Activated naive CD8-positive, alpha-beta T cell treated with anti-CD3 and anti-CD28 coated beads, Interleukin-2, amount 10 ng/mL, durations not matched to agents 7 days and 5 days (primary cell): ENCODE measurements at regions of chr2 and their contacts with region 1.

Region 1: GRCh38 chr2:69914170-69914960 is 544 bp upstream of the MXD1 start:
- DNase-seq: no peak
- ATAC-seq: peak; percentile 92
- H3K4me3 Mint-ChIP-seq: peak overlapping the region; percentile 84
- H3K27ac Mint-ChIP-seq: peak overlapping the region; percentile 71
- H3K4me1 Mint-ChIP-seq: peaks cover 27% of the 10 kb centered on the region
- H3K27me3 Mint-ChIP-seq: no peaks in the 10 kb centered on the region

Region 2: GRCh38 chr2:69837533-69837932 is 76.8 kb before region 1 on chr2:
- POLR2A ChIA-PET with region 1: no interaction called
- DNase-seq: no peak
- ATAC-seq: no peak
- H3K4me3 Mint-ChIP-seq: no peak overlapping the region
- H3K27ac Mint-ChIP-seq: no peak overlapping the region
- H3K4me1 Mint-ChIP-seq: peaks cover 35% of the 10 kb centered on the region
- H3K27me3 Mint-ChIP-seq: no peaks in the 10 kb centered on the region

Region 3: DNA sequence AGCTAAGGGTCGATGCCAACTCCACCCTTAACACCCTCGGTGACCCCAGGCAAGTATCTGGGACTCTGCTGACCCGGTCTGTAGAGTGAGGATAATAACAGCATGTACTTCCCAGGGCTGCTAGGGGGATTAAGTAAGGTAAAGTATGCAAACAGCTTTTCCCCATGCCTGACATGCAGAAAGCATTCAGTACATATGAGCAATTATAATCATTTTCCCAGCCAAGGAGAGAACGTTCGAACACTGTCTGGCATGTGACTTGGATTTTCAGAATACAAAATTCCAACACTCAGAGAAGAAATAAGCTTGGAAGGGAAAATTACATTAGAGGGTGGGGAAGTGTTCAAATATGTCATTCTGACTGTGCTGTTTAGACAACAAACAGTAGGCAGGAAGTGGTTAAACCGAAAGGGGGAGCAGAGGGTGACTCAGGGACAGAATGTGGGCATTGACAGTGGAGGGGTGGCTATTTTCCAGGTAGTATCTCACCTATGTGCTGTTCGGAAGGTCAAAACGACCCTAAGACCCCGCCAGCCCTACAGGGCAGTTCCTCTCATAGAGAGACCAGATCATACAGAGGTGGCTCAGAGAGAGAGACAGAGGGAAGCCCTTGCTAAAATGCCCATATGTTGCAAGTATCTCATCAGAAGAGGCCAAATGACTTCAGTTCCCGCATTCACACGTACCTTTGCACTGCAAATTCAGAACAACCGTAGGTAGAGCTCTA is 32.1 kb after region 1 on chr2:
- POLR2A ChIA-PET with region 1: interaction called, 10 read pairs
- DNase-seq: peak; percentile 52
- ATAC-seq: peak; percentile 95
- H3K4me3 Mint-ChIP-seq: peak overlapping the region; percentile 68
- H3K27ac Mint-ChIP-seq: peak overlapping the region; percentile 83
- H3K4me1 Mint-ChIP-seq: peaks cover 25% of the 10 kb centered on the region
- H3K27me3 Mint-ChIP-seq: peaks cover 3% of the 10 kb centered on the region

Region 4: DNA sequence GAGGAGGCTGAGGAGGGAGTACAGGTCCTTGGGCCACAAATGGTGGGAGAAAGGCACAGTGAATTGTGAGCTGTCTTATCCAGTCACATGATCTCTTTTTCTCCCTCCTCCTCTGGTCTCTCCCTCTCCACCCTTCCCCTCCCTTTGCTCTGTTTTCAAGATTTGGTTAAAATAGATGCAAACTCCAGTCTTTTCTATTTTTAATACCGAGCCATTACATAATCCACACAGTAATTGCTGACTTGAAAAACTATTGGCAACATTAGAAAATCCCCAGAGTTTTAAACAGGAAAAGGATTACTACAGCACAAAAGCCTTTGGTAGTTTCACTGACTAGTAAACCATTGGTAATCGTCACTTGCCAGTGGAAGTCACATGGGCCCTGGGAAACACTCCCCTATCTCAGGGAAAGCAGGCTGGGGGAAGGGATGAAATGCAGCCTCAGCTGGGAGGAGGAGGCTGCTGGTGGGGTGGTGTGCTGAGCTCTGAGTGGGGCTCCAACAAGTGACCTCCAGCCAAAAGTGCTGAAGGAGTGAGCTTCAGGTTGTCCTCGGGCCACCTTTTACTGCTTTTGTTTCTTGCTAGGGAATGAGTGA is 115.5 kb after region 1 on chr2:
- POLR2A ChIA-PET with region 1: no interaction called
- DNase-seq: no peak
- ATAC-seq: no peak
- H3K4me3 Mint-ChIP-seq: no peak overlapping the region
- H3K27ac Mint-ChIP-seq: no peak overlapping the region
- H3K4me1 Mint-ChIP-seq: peaks cover 13% of the 10 kb centered on the region
- H3K27me3 Mint-ChIP-seq: no peaks in the 10 kb centered on the region

Region 5: DNA sequence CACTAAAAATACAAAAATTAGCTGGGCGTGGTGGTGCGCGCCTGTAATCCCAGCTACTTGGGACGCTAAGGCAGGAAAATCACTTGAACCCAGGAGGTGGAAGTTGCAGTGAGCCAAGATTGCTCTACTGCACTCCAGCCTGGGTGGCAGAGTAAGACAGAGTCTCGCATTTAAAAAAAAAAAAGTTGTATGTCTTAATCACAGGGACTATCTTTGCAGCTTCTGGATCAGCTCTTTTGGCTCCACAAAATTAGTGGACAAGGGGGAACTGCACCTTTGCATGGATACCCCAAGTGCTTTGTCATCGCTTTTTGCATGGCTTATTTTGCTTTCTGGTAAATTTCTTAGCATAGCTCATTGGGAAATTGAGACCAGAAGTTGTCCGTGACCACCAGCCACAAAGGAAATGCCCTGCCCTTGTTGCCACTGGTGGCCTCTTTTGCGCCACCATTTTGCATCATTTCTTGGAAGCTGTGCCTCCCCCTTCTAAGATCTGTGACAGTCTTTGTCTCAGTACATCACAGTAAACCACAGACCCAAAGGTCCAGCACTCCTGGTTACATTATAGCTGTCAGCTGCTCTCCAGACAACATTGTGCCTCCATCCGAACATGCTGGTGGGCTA is 129.0 kb after region 1 on chr2:
- POLR2A ChIA-PET with region 1: interaction called, 11 read pairs
- DNase-seq: peak; percentile 61
- ATAC-seq: peak; percentile 86
- H3K4me3 Mint-ChIP-seq: peak overlapping the region; percentile 75
- H3K27ac Mint-ChIP-seq: peak overlapping the region; percentile 94
- H3K4me1 Mint-ChIP-seq: peaks cover 56% of the 10 kb centered on the region
- H3K27me3 Mint-ChIP-seq: no peaks in the 10 kb centered on the region

Region 6: DNA sequence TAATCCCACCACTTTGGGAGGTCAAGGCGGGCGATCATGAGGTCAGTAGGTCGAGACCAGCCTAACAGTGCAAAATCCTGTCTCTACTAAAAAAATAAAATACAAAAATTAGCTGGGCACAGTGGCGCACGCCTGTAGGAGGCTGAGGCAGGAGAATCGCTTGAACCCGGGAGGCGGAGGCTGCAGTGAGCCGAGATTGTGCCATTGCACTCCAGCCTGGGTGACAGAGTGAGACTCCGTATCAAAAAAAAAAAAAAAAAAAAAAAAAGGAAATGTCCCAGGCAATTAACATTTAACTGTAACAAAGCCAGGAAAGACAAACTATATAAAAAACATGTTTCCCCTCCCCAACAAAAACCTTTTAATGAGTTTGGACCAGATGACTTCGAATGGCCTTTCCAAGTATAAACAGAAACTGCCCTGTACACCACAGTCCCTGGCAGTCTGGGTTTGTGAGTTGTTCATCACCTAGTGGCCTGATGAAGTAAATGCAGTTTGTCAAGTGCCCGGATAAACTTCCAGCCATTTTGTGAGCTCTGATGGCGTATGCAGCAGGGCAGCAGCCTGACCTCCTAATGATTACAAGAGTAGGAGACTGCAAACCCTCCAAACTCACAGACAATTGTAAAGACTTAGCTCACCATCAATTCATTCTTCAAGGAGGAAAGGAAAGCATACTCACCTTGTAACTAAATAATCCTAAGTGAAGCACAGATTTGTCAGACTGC is 156.3 kb after region 1 on chr2:
- POLR2A ChIA-PET with region 1: interaction called, 84 read pairs
- DNase-seq: no peak
- ATAC-seq: peak; percentile 76
- H3K4me3 Mint-ChIP-seq: peak overlapping the region; percentile 77
- H3K27ac Mint-ChIP-seq: peak overlapping the region; percentile 96
- H3K4me1 Mint-ChIP-seq: peaks cover 40% of the 10 kb centered on the region
- H3K27me3 Mint-ChIP-seq: no peaks in the 10 kb centered on the region

Region 7: GRCh38 chr2:70086838-70087701 is 172.7 kb after region 1 on chr2 and contains the start of gene PCBP1:
- POLR2A ChIA-PET with region 1: interaction called, 70 read pairs
- DNase-seq: peak; percentile 99
- ATAC-seq: peak; percentile 34
- H3K4me3 Mint-ChIP-seq: peak within 1 kb of the TSS; percentile 96
- H3K27ac Mint-ChIP-seq: peak within 1 kb of the TSS; percentile 98
- H3K4me1 Mint-ChIP-seq: peaks cover 47% of the 10 kb centered on the region
- H3K27me3 Mint-ChIP-seq: no peaks in the 10 kb centered on the region
- total RNA-seq, gene PCBP1: 459 to 467 TPM

Region 8: GRCh38 chr2:70132244-70133126 is 218.1 kb after region 1 on chr2:
- POLR2A ChIA-PET with region 1: interaction called, 16 read pairs
- DNase-seq: no peak
- ATAC-seq: peak; percentile 51
- H3K4me3 Mint-ChIP-seq: peak overlapping the region; percentile 84
- H3K27ac Mint-ChIP-seq: peak overlapping the region; percentile 96
- H3K4me1 Mint-ChIP-seq: peaks cover 60% of the 10 kb centered on the region
- H3K27me3 Mint-ChIP-seq: no peaks in the 10 kb centered on the region

Region 9: DNA sequence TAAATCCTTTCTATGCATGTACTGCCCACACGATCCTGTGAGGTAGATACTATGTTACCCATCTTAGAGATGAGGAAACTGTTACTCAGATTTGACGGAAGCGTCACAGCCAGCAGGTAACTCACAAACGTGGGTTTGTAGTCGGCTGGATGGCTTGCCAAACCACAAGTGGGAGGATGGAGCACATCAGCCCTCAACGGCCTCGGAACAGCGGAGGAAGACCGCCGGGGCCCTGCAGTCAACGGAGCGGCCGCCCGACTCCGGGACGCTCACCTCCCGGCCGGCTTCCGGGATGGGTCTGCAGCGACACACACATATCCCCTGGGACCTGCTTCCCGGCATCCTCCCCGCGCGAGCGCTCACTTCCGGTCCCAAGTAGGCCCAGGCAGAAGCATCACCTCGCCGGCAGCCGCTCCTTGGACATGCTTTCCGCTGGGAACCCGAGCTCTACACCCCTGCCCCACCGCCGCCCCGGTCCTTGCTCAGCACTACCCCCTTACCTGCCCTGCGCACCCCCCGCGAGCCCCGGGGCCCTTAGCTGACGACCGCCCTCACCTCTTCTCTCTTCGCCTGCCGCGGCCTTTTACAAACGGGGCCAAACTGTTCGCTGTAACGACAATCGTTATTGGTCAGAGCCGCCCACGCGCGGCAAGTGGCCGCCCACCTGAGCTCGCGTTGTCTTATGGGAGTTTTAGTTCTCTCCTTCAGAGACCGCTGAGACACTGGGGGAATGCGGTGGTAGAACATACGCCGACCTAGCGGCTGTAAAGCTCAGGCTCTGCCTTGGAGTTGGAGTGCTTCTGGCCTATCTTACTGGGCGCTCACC is 276.3 kb after region 1 on chr2 and contains the start of gene C2orf42:
- POLR2A ChIA-PET with region 1: interaction called, 29 read pairs
- DNase-seq: peak; percentile 93
- ATAC-seq: peak; percentile 85
- H3K4me3 Mint-ChIP-seq: peak within 1 kb of the TSS; percentile 95
- H3K27ac Mint-ChIP-seq: peak within 1 kb of the TSS; percentile 99
- H3K4me1 Mint-ChIP-seq: peaks cover 14% of the 10 kb centered on the region
- H3K27me3 Mint-ChIP-seq: peaks cover 2% of the 10 kb centered on the region
- total RNA-seq, gene C2orf42: 30.9 to 33.8 TPM